ENCODE measurements at regions of chr17 and their contacts with region 1.

Region 1: GRCh38 chr17:48413613-48414405 is 16.2 kb downstream of the SKAP1 start:
- DNase-seq: peak in 5 of 9 donors; percentile 12 to 38 (median 16)
- ATAC-seq: peak; percentile 81
- H3K4me3 ChIP-seq: peak overlapping the region; percentile 9
- H3K4me3 Mint-ChIP-seq: peak overlapping the region; percentile 45 to 81 (median 72)
- H3K27ac ChIP-seq: peak overlapping the region; percentile 69
- H3K27ac Mint-ChIP-seq: peak overlapping the region; percentile 85 to 96 (median 91)
- H3K4me1 ChIP-seq: peaks cover 55 to 56% of the 10 kb centered on the region in 2 donors
- H3K4me1 Mint-ChIP-seq: peaks cover 42 to 98% (median 88%) of the 10 kb centered on the region in 7 donors
- H3K27me3 ChIP-seq: no peaks in the 10 kb centered on the region
- H3K27me3 Mint-ChIP-seq: no peaks in the 10 kb centered on the region

Region 2: DNA sequence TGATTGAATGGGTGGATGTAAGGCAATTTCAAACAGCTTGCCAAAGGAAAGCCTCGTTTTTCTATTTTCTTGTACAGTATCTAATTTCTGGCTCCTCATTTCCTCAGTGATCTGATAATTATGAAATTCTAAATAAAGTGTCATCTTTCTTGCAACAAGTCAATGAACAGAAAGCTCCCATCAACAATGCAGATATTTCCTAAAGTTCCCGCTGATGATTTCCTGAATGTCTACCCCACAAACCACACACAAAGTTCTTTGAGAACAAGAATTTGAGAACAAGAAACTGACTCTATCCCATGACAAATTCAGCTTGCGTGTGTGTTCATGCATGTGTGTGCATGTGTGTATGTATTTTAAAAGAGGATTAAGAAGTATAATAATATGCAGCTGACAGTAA is 19.0 kb before region 1 on chr17:
- CTCF ChIA-PET with region 1: interaction called, 3 read pairs
- POLR2A ChIA-PET with region 1: interaction called, 4 read pairs
- intact Hi-C with region 1: loop called in 1 of 2 experiments (anchors 2 kb)
- DNase-seq: no peak
- ATAC-seq: no peak
- H3K4me3 ChIP-seq: no peak overlapping the region
- H3K4me3 Mint-ChIP-seq: no peak overlapping the region
- H3K27ac ChIP-seq: no peak overlapping the region
- H3K27ac Mint-ChIP-seq: peak overlapping the region in 2 of 9 donors; percentile 22 to 32
- H3K4me1 ChIP-seq: peaks cover 0 to 4% of the 10 kb centered on the region in 2 donors
- H3K4me1 Mint-ChIP-seq: peaks cover 19 to 78% (median 70%) of the 10 kb centered on the region in 7 donors
- H3K27me3 ChIP-seq: no peaks in the 10 kb centered on the region
- H3K27me3 Mint-ChIP-seq: no peaks in the 10 kb centered on the region

Region 3: DNA sequence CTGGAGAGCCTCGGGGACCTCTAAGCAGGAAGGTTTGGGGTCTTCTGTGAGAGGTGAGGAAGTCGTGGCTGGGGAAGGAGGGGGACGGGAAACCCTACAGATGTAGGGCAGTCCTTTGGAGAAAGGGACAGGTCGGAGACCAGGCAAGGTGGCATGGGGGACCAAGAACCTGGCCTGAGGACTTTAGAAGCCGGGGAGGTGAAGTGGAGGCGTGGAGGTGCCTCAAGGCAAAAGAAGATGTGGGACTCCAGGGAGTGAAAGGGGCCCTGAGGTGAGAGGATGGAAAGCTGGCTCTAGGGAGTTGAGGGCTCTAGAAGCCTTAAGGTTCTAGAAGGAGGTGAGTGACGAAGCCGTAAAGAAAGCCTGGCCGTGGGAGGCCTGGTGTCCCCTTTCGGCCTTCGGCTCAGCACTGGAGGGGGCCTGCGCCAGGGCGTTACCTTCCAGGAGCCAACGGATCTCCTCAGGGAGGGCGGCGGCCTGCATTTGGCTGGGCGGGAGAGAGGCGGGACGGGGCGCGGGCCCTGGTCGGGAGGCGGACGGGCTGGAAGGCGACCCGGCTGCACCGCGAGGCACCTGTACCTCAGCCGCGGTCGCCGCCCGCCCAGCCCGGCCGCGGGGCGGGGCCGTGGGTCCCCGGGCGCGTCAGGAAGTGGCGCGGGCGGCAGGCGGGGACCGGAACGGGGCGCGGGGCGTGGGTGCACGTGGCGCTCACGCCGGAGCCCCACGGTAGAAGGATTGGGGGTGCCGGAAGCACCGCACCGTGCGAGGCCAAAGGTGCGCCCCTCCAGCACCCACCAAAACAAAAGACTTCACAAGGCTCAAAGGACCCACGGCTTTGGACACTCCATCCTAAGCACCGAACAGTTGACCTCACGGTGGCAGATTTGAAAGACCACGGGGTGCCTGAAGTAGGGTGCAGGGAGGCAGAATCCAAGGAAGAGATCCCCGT is 16.1 kb after region 1 on chr17 and contains the start of gene SKAP1:
- CTCF ChIA-PET with region 1: interaction called, 4 read pairs
- POLR2A ChIA-PET with region 1: interaction called, 24 read pairs
- intact Hi-C with region 1: loop called (anchors 1 to 2 kb)
- DNase-seq: peak; percentile 52 to 80 (median 62)
- ATAC-seq: peak; percentile 84
- H3K4me3 ChIP-seq: peak within 1 kb of the TSS; percentile 92
- H3K4me3 Mint-ChIP-seq: peak within 1 kb of the TSS; percentile 90 to 100 (median 98)
- H3K27ac ChIP-seq: peak within 1 kb of the TSS; percentile 97
- H3K27ac Mint-ChIP-seq: peak within 1 kb of the TSS; percentile 91 to 99 (median 98)
- H3K4me1 ChIP-seq: peaks cover 36 to 58% of the 10 kb centered on the region in 2 donors
- H3K4me1 Mint-ChIP-seq: peaks cover 50 to 93% (median 82%) of the 10 kb centered on the region in 7 donors
- H3K27me3 ChIP-seq: no peaks in the 10 kb centered on the region
- H3K27me3 Mint-ChIP-seq: no peaks in the 10 kb centered on the region
- total RNA-seq, gene SKAP1: 99.3 to 117 (median 109) TPM

Region 4: DNA sequence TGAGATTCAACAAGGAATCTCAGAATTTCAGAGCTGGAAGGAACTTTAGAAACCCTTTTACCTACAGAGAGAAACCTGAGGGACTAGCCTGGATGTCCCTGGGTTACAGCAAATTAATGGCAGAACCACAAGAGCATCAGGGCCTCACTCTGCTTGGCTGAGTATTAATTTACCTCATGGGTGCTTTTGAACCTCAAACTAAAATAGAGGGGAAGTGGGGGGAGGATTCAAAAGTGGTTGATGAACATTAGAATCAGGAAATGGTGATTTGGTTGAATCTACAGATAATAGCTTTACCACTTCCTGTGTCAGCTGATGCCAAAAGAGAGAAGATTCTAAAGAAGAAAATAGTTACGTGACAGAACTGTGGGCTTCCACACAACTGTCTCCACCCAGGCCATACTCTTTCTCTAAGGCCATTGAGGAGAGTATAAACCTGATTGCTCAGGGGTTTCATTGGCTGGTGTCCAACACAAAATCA is 27.5 kb after region 1 on chr17:
- CTCF ChIA-PET with region 1: interaction called, 6 read pairs
- POLR2A ChIA-PET with region 1: interaction called, 18 read pairs
- intact Hi-C with region 1: loop called in 1 of 2 experiments (anchors 1 kb)
- DNase-seq: peak in 7 of 9 donors; percentile 74 to 88 (median 86)
- ATAC-seq: peak; percentile 80
- H3K4me3 ChIP-seq: peak overlapping the region; percentile 28
- H3K4me3 Mint-ChIP-seq: peak overlapping the region; percentile 61 to 86 (median 76)
- H3K27ac ChIP-seq: peak overlapping the region; percentile 63
- H3K27ac Mint-ChIP-seq: peak overlapping the region; percentile 69 to 96 (median 95)
- H3K4me1 ChIP-seq: peaks cover 93 to 95% of the 10 kb centered on the region in 2 donors
- H3K4me1 Mint-ChIP-seq: peaks cover 80 to 97% (median 94%) of the 10 kb centered on the region in 7 donors
- H3K27me3 ChIP-seq: no peaks in the 10 kb centered on the region
- H3K27me3 Mint-ChIP-seq: no peaks in the 10 kb centered on the region

Measured in naive thymus-derived CD4-positive, alpha-beta T cell (primary cell).